ENCODE measurements at regions of chr3 and their contacts with region 1.

Region 1: GRCh38 chr3:69013253-69014021 is at the start of gene EOGT:
- DNase-seq: peak; percentile 59 to 87 (median 66)
- ATAC-seq: peak; percentile 92
- H3K4me3 ChIP-seq: peak within 1 kb of the TSS; percentile 68
- H3K4me3 Mint-ChIP-seq: peak within 1 kb of the TSS; percentile 84 to 95 (median 93)
- H3K27ac ChIP-seq: peak within 1 kb of the TSS; percentile 78
- H3K27ac Mint-ChIP-seq: peak within 1 kb of the TSS; percentile 32 to 94 (median 82)
- H3K4me1 ChIP-seq: peaks cover 0 to 12% of the 10 kb centered on the region in 2 donors
- H3K4me1 Mint-ChIP-seq: peaks cover 10 to 49% (median 26%) of the 10 kb centered on the region in 7 donors
- H3K27me3 ChIP-seq: no peaks in the 10 kb centered on the region
- H3K27me3 Mint-ChIP-seq: no peaks in the 10 kb centered on the region
- total RNA-seq, gene EOGT: 10.1 to 19.1 (median 13.1) TPM

Region 2: DNA sequence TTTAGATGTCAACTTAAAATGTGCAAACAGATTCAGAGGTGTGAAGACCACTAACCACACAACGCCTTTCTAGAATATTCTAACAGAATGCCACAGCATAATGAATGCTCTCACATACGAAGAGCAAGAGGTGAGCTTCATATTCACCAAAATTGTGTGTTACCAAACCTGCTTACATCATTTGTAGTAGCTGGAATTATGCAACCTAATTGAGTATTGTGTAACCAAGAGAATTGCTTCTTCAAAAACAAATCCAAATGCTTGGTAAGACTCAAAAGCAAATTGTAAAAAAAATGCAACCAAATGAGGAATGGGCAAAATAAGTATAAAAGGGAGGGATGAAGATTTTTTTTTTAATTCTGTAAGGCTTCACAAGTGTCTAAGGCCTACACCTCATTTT is 241.8 kb before region 1 on chr3:
- CTCF ChIA-PET with region 1: no interaction called
- POLR2A ChIA-PET with region 1: no interaction called
- intact Hi-C with region 1: no loop called
- DNase-seq: no peak
- ATAC-seq: no peak
- H3K4me3 ChIP-seq: no peak overlapping the region
- H3K4me3 Mint-ChIP-seq: no peak overlapping the region
- H3K27ac ChIP-seq: no peak overlapping the region
- H3K27ac Mint-ChIP-seq: no peak overlapping the region
- H3K4me1 ChIP-seq: no peaks in the 10 kb centered on the region
- H3K4me1 Mint-ChIP-seq: no peaks in the 10 kb centered on the region
- H3K27me3 ChIP-seq: no peaks in the 10 kb centered on the region
- H3K27me3 Mint-ChIP-seq: peaks cover 0 to 22% (median 12%) of the 10 kb centered on the region in 5 donors

Region 3: GRCh38 chr3:69033470-69033869 is 20.0 kb after region 1 on chr3:
- CTCF ChIA-PET with region 1: interaction called, 4 read pairs
- POLR2A ChIA-PET with region 1: no interaction called
- intact Hi-C with region 1: loop called in 1 of 2 experiments (anchors 2 kb)
- DNase-seq: no peak
- ATAC-seq: peak; percentile 50
- H3K4me3 ChIP-seq: no peak overlapping the region
- H3K4me3 Mint-ChIP-seq: no peak overlapping the region
- H3K27ac ChIP-seq: no peak overlapping the region
- H3K27ac Mint-ChIP-seq: peak overlapping the region in 2 of 9 donors; percentile 9 to 52
- H3K4me1 ChIP-seq: no peaks in the 10 kb centered on the region
- H3K4me1 Mint-ChIP-seq: peaks cover 0 to 21% (median 3%) of the 10 kb centered on the region in 7 donors
- H3K27me3 ChIP-seq: no peaks in the 10 kb centered on the region
- H3K27me3 Mint-ChIP-seq: no peaks in the 10 kb centered on the region

Region 4: DNA sequence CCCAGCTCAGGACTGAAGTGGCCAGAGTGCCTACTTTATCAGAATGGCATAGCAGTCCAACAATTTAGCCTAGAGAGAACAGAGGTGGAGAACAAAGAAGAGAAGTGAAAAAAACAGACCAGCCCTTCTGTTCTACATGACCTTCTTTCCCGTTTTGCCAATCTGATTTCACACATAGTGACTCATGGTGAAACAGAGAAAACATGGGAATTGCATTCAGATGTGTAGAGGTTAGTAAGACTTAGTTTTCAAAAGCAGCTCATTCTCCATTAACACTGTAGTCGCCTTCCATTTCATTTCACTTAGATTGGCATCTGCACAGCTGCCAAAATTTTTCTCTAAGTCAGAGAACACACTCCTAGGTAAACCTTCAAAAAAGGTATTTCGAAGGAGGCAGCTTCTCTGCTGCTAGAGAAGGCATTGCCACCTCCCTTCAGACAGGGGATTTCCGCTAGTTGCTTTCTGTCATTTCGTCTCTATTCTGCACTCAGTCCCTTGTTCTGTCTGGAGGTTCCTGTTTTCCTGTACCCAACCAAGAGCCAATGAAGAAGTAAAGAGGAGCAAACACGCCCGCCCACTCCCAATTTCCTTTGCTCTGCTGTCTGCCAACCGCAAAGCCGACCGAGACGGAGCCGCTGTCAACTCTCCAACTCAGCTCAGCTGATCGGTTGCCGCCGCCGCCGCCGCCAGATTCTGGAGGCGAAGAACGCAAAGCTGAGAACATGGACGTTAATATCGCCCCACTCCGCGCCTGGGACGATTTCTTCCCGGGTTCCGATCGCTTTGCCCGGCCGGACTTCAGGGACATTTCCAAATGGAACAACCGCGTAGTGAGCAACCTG is 71.1 kb after region 1 on chr3 and contains the start of gene ARL6IP5:
- CTCF ChIA-PET with region 1: no interaction called
- POLR2A ChIA-PET with region 1: interaction called, 5 read pairs
- intact Hi-C with region 1: loop called in 1 of 2 experiments (anchors 1 kb)
- DNase-seq: peak; percentile 71 to 95 (median 93)
- ATAC-seq: peak; percentile 84
- H3K4me3 ChIP-seq: peak within 1 kb of the TSS; percentile 89
- H3K4me3 Mint-ChIP-seq: peak within 1 kb of the TSS; percentile 88 to 99 (median 97)
- H3K27ac ChIP-seq: peak within 1 kb of the TSS; percentile 76
- H3K27ac Mint-ChIP-seq: peak within 1 kb of the TSS; percentile 92 to 99 (median 98)
- H3K4me1 ChIP-seq: peaks cover 58% of the 10 kb centered on the region in 2 donors
- H3K4me1 Mint-ChIP-seq: peaks cover 44 to 72% (median 62%) of the 10 kb centered on the region in 7 donors
- H3K27me3 ChIP-seq: no peaks in the 10 kb centered on the region
- H3K27me3 Mint-ChIP-seq: no peaks in the 10 kb centered on the region
- total RNA-seq, gene ARL6IP5: 75.8 to 226 (median 119) TPM

Region 5: DNA sequence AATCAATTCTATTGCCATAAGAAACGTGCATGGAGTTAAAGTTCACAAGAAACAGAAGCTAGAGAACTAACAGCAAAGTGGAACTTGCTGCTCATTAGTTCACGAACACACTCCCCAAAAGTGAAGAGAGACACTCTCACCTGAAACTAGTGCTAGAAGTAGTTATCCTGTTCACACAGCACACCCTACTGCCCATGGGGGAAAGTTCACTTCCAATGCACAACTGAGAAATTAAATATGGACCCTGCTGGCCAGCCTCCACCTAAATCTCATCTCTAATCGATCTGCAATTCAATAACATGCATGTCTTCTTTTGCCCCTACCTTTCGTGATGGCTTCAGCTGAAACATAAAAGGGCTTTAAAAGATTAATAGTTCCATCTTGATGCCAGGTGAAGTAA is 411.8 kb after region 1 on chr3:
- CTCF ChIA-PET with region 1: no interaction called
- POLR2A ChIA-PET with region 1: no interaction called
- intact Hi-C with region 1: loop called in 1 of 2 experiments (anchors 2 kb)
- DNase-seq: peak in 5 of 9 donors; percentile 3 to 20 (median 10)
- ATAC-seq: no peak
- H3K4me3 ChIP-seq: no peak overlapping the region
- H3K4me3 Mint-ChIP-seq: no peak overlapping the region
- H3K27ac ChIP-seq: no peak overlapping the region
- H3K27ac Mint-ChIP-seq: no peak overlapping the region
- H3K4me1 ChIP-seq: no peaks in the 10 kb centered on the region
- H3K4me1 Mint-ChIP-seq: peaks cover 0 to 5% (median 0%) of the 10 kb centered on the region in 7 donors
- H3K27me3 ChIP-seq: no peaks in the 10 kb centered on the region
- H3K27me3 Mint-ChIP-seq: peaks cover 0 to 4% (median 0%) of the 10 kb centered on the region in 5 donors

Measured in naive thymus-derived CD4-positive, alpha-beta T cell (primary cell).